ENCODE measurements at regions of chr14 and their contacts with region 1.

Region 1: DNA sequence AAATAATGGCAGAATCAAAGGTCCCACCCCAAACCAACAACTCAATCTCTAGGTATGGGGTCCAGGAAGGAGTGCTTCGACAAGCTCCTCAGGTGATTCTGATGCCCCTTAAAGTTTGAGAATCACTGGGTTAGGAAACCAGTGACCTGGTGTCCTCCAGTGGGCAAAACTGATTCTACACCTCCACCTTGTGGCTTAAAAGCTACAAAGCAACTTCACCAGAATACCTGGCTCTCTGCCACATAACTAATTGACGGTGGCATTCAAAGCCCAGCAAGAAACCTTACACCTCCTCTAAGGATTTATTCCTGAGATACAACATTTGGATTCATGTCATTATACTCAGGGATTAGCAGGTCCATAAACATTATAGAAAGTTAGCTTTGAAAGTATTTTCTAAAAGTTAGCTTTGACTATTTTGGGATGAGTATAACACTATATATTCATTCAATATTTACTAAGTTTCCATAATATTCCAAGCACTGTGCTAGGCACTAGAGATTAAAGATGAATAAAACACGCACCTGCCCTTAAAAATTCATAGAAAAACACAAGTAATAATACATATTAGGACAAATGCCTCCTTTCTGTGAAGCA is 45.4 kb downstream of the DCAF5 start:
- DNase-seq: no peak
- ATAC-seq: peak; percentile 50
- H3K4me3 Mint-ChIP-seq: no peak overlapping the region
- H3K27ac Mint-ChIP-seq: no peak overlapping the region
- H3K4me1 Mint-ChIP-seq: no peaks in the 10 kb centered on the region
- H3K27me3 Mint-ChIP-seq: no peaks in the 10 kb centered on the region
- CTCF ChIP-seq: no peak

Region 2: DNA sequence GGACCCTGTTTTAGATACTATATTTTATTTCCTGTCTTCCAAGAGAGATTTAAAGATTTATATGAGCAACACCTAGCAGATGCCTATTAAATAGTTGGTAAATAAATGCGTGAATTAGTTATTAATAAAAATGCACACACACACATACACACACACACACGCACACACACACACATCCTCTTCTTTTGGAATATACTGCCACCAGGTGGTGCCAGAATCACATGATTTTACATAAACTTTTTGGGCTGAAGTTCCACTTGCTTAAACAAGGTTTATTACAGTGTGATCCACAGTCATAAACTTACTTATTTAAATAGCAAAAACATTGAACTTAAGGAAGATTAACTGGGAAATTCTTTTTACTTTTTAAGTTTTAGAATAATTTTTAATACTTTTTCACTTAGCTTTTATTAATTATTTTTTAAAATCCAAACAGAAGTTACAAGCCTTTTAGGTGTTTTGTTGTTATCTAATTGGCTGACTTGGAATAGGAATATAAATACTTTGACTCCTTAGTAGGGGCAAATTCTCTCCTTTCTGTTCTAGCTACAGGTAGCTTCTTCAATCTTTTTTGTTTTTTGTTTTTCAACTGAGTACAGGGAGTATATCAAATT is 1270.4 kb before region 1 on chr14:
- CTCF ChIA-PET with region 1: interaction called, 6 read pairs
- POLR2A ChIA-PET with region 1: no interaction called
- intact Hi-C with region 1: loop called (anchors 1 kb)
- DNase-seq: no peak
- ATAC-seq: peak; percentile 75
- H3K4me3 Mint-ChIP-seq: no peak overlapping the region
- H3K27ac Mint-ChIP-seq: no peak overlapping the region
- H3K4me1 Mint-ChIP-seq: no peaks in the 10 kb centered on the region
- H3K27me3 Mint-ChIP-seq: no peaks in the 10 kb centered on the region
- CTCF ChIP-seq: no peak

Region 3: DNA sequence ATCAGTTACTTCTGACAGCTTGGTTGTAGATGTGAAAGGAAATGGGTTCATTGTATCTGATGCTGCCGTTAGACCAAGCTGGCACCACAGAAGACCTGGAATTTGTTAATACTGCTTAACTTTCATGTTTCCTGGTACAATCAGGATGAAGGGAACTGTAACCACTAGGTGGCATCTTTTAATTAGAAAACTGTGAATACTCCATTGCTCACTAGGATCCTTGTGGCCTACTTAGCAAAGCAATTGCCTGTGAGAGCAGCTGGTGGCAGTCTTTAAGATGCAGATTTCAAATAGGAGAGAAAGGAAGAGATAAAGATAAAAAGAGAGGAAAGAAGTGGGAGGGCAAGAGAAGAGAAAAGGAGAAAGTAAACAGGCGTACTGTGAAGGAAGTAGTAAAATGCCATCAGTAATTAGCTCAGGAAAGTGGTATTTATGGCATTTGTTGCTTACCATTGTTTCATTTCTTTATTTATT is 1173.5 kb before region 1 on chr14:
- CTCF ChIA-PET with region 1: interaction called, 14 read pairs
- POLR2A ChIA-PET with region 1: no interaction called
- intact Hi-C with region 1: loop called (anchors 1 kb)
- DNase-seq: no peak
- ATAC-seq: peak; percentile 77
- H3K4me3 Mint-ChIP-seq: no peak overlapping the region
- H3K27ac Mint-ChIP-seq: no peak overlapping the region
- H3K4me1 Mint-ChIP-seq: peaks cover 4% of the 10 kb centered on the region
- H3K27me3 Mint-ChIP-seq: no peaks in the 10 kb centered on the region
- CTCF ChIP-seq: no peak

Region 4: DNA sequence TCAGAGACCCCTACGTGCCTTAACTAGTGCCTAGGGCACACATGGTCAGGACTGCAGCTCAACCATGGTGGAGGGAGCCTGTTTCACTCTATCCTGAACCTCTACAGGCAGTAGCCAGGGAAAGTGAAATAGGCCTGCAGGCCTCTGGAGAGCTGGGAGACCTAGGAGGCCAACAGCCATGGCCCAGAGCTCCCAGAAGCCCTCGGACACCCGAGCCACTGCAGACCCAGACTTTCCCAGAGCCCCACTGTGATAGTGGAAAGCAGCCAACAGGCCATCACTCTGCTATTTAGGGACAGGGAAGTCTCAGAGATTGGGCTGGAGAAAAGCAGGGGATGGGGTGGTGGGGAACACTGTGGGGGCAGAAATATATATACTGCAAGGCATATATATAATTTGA is 258.1 kb before region 1 on chr14:
- CTCF ChIA-PET with region 1: no interaction called
- POLR2A ChIA-PET with region 1: interaction called, 10 read pairs
- intact Hi-C with region 1: no loop called
- DNase-seq: no peak
- ATAC-seq: no peak
- H3K4me3 Mint-ChIP-seq: no peak overlapping the region
- H3K27ac Mint-ChIP-seq: no peak overlapping the region
- H3K4me1 Mint-ChIP-seq: no peaks in the 10 kb centered on the region
- H3K27me3 Mint-ChIP-seq: peaks cover 4% of the 10 kb centered on the region
- CTCF ChIP-seq: no peak

Region 5: DNA sequence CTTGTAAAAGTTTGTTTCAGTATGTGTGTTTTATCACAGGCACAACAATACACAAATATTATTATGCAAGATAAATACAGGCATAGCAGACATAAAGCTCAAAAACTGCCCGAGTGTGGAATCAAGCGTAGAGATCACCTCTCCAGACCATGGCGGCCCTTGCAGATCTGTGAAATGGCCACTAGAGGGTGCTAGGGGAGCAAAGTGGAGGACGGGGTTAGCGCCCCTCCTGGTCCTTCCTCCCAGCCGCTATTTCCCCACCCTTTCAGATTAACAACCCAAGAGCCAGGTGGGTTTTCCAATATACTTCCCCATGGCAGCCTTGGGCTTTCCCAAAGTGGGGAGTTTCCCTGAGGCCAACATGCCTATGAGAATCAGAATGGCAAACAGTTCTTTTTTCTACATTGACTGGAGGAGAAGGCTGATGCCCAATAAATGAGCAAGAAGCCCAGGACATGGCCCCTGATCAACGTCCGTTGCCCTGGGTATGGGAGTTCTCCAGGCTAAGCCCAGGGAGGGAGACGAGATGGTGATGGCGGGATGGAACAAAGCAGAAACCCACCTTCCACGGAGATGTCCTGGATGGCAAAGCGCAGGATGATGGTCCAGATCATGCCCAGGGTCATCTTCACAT is 195.8 kb before region 1 on chr14:
- CTCF ChIA-PET with region 1: no interaction called
- POLR2A ChIA-PET with region 1: no interaction called
- intact Hi-C with region 1: loop called (anchors 1 kb)
- DNase-seq: peak; percentile 37
- ATAC-seq: peak; percentile 91
- H3K4me3 Mint-ChIP-seq: no peak overlapping the region
- H3K27ac Mint-ChIP-seq: no peak overlapping the region
- H3K4me1 Mint-ChIP-seq: peaks cover 8% of the 10 kb centered on the region
- H3K27me3 Mint-ChIP-seq: peaks cover 6% of the 10 kb centered on the region
- CTCF ChIP-seq: peak; percentile 66